ENCODE measurements at regions of chr3 and their contacts with region 1.

Region 1: GRCh38 chr3:184371570-184372018 is 6.4 kb downstream of the THPO start:
- DNase-seq: peak; percentile 73
- ATAC-seq: peak; percentile 93
- H3K4me3 ChIP-seq: no peak overlapping the region
- H3K27ac ChIP-seq: peak overlapping the region; percentile 4; the same call in 1 of the 2 replicates
- H3K4me1 ChIP-seq: peaks cover 5 to 23% of the 10 kb centered on the region in 2 experiments; a peak in 3 of 4 replicates
- H3K27me3 ChIP-seq: no peaks in the 10 kb centered on the region
- CTCF ChIP-seq: peak in 2 of 3 experiments; percentile 95 to 98; a peak in 4 of 6 replicates
- POLR2A ChIP-seq: no peak
- RAD21 ChIP-seq: no peak

Region 2: DNA sequence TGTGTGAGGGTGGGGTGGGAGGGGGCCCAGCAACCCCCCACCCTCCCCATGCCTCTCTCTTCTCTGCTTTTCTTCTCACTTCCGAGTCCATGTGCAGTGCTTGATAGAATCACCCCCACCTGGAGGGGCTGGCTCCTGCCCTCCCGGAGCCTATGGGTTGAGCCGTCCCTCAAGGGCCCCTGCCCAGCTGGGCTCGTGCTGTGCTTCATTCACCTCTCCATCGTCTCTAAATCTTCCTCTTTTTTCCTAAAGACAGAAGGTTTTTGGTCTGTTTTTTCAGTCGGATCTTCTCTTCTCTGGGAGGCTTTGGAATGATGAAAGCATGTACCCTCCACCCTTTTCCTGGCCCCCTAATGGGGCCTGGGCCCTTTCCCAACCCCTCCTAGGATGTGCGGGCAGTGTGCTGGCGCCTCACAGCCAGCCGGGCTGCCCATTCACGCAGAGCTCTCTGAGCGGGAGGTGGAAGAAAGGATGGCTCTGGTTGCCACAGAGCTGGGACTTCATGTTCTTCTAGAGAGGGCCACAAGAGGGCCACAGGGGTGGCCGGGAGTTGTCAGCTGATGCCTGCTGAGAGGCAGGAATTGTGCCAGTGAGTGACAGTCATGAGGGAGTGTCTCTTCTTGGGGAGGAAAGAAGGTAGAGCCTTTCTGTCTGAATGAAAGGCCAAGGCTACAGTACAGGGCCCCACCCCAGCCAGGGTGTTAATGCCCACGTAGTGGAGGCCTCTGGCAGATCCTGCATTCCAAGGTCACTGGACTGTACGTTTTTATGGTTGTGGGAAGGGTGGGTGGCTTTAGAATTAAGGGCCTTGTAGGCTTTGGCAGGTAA is 26.1 kb before region 1 on chr3:
- CTCF ChIA-PET with region 1: no interaction called
- POLR2A ChIA-PET with region 1: no interaction called
- RAD21 ChIA-PET with region 1: no interaction called
- intact Hi-C with region 1: no loop called
- DNase-seq: peak; percentile 80
- ATAC-seq: peak; percentile 90
- H3K4me3 ChIP-seq: no peak overlapping the region
- H3K27ac ChIP-seq: peak overlapping the region; percentile 40
- H3K4me1 ChIP-seq: peaks cover 9 to 14% of the 10 kb centered on the region in 2 experiments
- H3K27me3 ChIP-seq: no peaks in the 10 kb centered on the region
- CTCF ChIP-seq: peak; percentile 67 to 79 (median 70)
- POLR2A ChIP-seq: no peak
- RAD21 ChIP-seq: no peak; the same call in 1 of the 2 replicates

Region 3: GRCh38 chr3:184417619-184418327 is 46.2 kb after region 1 on chr3:
- CTCF ChIA-PET with region 1: interaction called, 6 read pairs
- POLR2A ChIA-PET with region 1: no interaction called
- RAD21 ChIA-PET with region 1: interaction called in 1 of 2 experiments, 5 read pairs
- intact Hi-C with region 1: loop called (anchors 2 kb)
- DNase-seq: peak; percentile 52
- ATAC-seq: peak; percentile 97
- H3K4me3 ChIP-seq: no peak overlapping the region
- H3K27ac ChIP-seq: no peak overlapping the region
- H3K4me1 ChIP-seq: no peaks in the 10 kb centered on the region
- H3K27me3 ChIP-seq: no peaks in the 10 kb centered on the region
- CTCF ChIP-seq: peak; percentile 90 to 95 (median 94)
- POLR2A ChIP-seq: no peak
- RAD21 ChIP-seq: peak; percentile 97

Region 4: DNA sequence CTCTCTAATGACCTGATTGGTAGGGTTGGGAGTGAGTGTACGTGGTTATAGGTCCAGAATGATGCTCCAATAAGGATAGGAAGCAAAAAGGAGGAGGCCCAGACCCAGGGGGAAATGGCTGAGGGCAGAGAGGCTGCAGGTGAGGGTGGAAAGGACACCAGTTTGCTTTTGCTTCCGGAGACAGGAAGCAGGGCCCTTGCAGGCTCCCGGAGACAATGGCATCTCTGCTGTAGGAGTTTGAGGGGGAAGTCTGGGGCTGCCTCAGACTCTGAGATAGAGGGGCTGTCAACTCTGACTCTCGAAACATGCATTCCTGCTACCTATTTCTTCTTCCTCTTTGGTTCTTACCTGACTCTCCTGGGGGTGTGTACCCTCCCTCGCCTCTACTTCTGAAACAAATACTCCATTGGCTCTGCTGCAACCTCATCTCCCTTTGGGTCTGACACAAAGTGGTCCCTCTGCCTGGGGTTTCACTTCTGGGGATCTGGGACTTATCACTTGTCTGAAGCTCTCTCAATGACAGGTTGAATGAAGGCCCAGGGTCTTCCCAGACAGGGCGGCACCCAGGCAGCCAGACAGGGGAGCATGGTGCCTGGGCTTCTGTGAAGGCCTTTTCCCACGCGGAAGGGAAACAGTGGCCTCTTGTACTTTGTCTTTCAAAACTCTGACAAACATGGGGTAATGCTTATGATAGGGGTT is 69.8 kb after region 1 on chr3:
- CTCF ChIA-PET with region 1: no interaction called
- POLR2A ChIA-PET with region 1: no interaction called
- RAD21 ChIA-PET with region 1: no interaction called
- intact Hi-C with region 1: no loop called
- DNase-seq: no peak
- ATAC-seq: no peak
- H3K4me3 ChIP-seq: no peak overlapping the region
- H3K27ac ChIP-seq: no peak overlapping the region
- H3K4me1 ChIP-seq: peaks cover 10 to 18% of the 10 kb centered on the region in 2 experiments; a peak in 3 of 4 replicates
- H3K27me3 ChIP-seq: no peaks in the 10 kb centered on the region
- CTCF ChIP-seq: no peak
- POLR2A ChIP-seq: no peak
- RAD21 ChIP-seq: no peak

Region 5: GRCh38 chr3:184469423-184469822 is 97.8 kb after region 1 on chr3:
- CTCF ChIA-PET with region 1: interaction called, 51 read pairs
- POLR2A ChIA-PET with region 1: interaction called, 5 read pairs
- RAD21 ChIA-PET with region 1: interaction called, 3 read pairs
- intact Hi-C with region 1: loop called (anchors 1 kb)
- DNase-seq: peak; percentile 45
- ATAC-seq: peak; percentile 92
- H3K4me3 ChIP-seq: no peak overlapping the region
- H3K27ac ChIP-seq: no peak overlapping the region
- H3K4me1 ChIP-seq: peaks cover 2 to 12% of the 10 kb centered on the region in 2 experiments; a peak in 1 of 4 replicates
- H3K27me3 ChIP-seq: no peaks in the 10 kb centered on the region
- CTCF ChIP-seq: peak; percentile 89 to 93 (median 93)
- POLR2A ChIP-seq: no peak
- RAD21 ChIP-seq: peak; percentile 93

Region 6: GRCh38 chr3:184513276-184514170 is 141.9 kb after region 1 on chr3:
- CTCF ChIA-PET with region 1: interaction called, 52 read pairs
- POLR2A ChIA-PET with region 1: interaction called, 4 read pairs
- RAD21 ChIA-PET with region 1: interaction called, 6 to 8 read pairs
- intact Hi-C with region 1: loop called (anchors 10 kb)
- DNase-seq: peak; percentile 69
- ATAC-seq: peak; percentile 99
- H3K4me3 ChIP-seq: peak overlapping the region; percentile 32 to 49
- H3K27ac ChIP-seq: no peak overlapping the region
- H3K4me1 ChIP-seq: peaks cover 0 to 12% of the 10 kb centered on the region in 2 experiments; a peak in 1 of 4 replicates
- H3K27me3 ChIP-seq: no peaks in the 10 kb centered on the region
- CTCF ChIP-seq: peak; percentile 67 to 79 (median 79)
- POLR2A ChIP-seq: no peak
- RAD21 ChIP-seq: peak; percentile 80

Region 7: DNA sequence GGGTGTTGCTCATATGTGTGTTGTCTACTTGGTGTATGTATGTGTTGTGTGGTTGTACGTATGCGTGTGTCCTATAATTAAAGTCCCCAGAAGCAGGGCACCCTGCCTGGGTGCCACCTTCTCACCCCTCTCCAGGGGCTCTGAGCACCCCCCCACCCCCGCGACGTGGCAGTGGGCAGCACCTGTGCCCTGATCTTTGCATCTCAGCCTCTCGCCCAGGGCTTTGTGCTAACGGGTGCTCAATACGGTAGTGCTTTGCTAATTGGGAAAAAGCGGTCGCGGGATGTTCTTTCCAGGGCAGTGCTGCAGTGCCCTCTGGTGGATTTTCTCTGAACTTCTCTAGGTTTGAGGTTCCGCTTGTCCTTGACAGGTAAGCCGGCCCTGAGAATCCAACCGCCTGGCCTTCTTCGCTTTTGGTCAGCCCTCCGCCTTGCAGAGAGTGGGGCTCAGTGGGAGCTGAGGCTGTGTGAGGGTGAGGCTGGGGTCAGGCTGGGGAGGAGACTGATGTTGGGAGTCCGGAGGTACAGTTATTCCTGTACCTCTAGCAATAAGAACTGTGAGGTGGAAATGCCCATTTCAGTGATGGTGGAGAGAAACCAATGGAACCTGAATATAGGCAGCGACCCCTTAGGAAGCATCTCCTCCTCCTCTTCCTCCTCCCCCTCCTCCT is 172.4 kb after region 1 on chr3:
- CTCF ChIA-PET with region 1: interaction called, 152 read pairs
- POLR2A ChIA-PET with region 1: interaction called, 5 read pairs
- RAD21 ChIA-PET with region 1: interaction called, 10 to 19 read pairs
- intact Hi-C with region 1: loop called (anchors 1 kb)
- DNase-seq: peak; percentile 86
- ATAC-seq: peak; percentile 80
- H3K4me3 ChIP-seq: peak overlapping the region in 1 of 2 experiments; percentile 17; a peak in 1 of 4 replicates
- H3K27ac ChIP-seq: no peak overlapping the region
- H3K4me1 ChIP-seq: peaks cover 0 to 11% of the 10 kb centered on the region in 2 experiments; a peak in 2 of 4 replicates
- H3K27me3 ChIP-seq: no peaks in the 10 kb centered on the region
- CTCF ChIP-seq: peak; percentile 79 to 95 (median 93)
- POLR2A ChIP-seq: no peak
- RAD21 ChIP-seq: peak; percentile 99

Region 8: DNA sequence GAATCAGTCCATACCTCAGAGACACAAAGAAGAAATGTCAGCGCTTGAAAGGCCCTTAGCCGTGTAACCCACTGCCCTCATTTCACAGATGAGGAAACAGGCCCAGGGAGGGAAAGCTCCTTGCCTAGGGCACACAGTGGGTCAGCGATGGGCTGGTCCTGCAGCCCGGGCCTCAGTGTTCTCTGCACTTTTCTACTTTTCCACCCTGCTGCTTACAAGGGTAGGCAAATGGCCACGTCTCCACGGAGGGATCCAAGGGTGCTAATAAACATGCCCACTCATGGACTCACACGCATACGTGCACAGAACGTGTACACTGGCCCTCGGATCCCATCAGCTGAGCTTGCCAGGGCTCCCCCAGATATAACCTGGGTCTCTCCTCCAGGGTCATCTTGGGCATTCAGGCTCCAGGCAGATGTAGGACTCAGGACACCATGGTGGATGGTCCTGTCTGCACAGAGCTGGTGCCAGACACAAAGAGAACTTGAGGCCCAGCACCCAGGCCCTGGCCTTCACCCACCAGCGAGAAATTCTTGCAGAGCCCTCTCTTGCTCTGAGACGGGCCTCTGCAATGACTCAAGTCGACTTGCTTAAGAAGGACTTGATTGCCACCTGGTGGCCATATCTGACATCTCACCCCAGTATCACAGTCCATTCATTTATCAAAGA is 405.9 kb after region 1 on chr3:
- CTCF ChIA-PET with region 1: interaction called, 5 read pairs
- POLR2A ChIA-PET with region 1: no interaction called
- RAD21 ChIA-PET with region 1: no interaction called
- intact Hi-C with region 1: loop called (anchors 10 kb)
- DNase-seq: peak; percentile 91
- ATAC-seq: peak; percentile 97
- H3K4me3 ChIP-seq: no peak overlapping the region
- H3K27ac ChIP-seq: no peak overlapping the region
- H3K4me1 ChIP-seq: peaks cover 0 to 5% of the 10 kb centered on the region in 2 experiments; a peak in 1 of 4 replicates
- H3K27me3 ChIP-seq: 0 out of 2 replicates have a peak, but pooled peaks cover 6% of the 10 kb centered on the region
- CTCF ChIP-seq: peak; percentile 64 to 98 (median 83)
- POLR2A ChIP-seq: no peak
- RAD21 ChIP-seq: peak; percentile 99